ENCODE measurements at regions of chr17 and their contacts with region 1.

Region 1: GRCh38 chr17:81142301-81143199 is 22.8 kb upstream of the PVALEF start:
- DNase-seq: peak; percentile 91
- H3K4me3 ChIP-seq: no peak overlapping the region
- H3K27ac ChIP-seq: peak overlapping the region in 1 of 8 donors; percentile 28
- H3K4me1 ChIP-seq: peaks cover 5 to 34% (median 12%) of the 10 kb centered on the region in 6 donors
- H3K27me3 ChIP-seq: peaks cover 0 to 7% (median 0%) of the 10 kb centered on the region in 7 donors
- CTCF ChIP-seq: peak; percentile 45 to 82 (median 74)
- POLR2A ChIP-seq: no peak

Region 2: GRCh38 chr17:81189670-81190530 is 47.4 kb after region 1 on chr17:
- intact Hi-C with region 1: loop called (anchors 10 kb)
- DNase-seq: no peak
- H3K4me3 ChIP-seq: no peak overlapping the region
- H3K27ac ChIP-seq: no peak overlapping the region
- H3K4me1 ChIP-seq: peaks cover 0 to 27% (median 20%) of the 10 kb centered on the region in 6 donors
- H3K27me3 ChIP-seq: no peaks in the 10 kb centered on the region
- CTCF ChIP-seq: peak in 1 of 11 experiments; percentile 19
- POLR2A ChIP-seq: no peak

Region 3: DNA sequence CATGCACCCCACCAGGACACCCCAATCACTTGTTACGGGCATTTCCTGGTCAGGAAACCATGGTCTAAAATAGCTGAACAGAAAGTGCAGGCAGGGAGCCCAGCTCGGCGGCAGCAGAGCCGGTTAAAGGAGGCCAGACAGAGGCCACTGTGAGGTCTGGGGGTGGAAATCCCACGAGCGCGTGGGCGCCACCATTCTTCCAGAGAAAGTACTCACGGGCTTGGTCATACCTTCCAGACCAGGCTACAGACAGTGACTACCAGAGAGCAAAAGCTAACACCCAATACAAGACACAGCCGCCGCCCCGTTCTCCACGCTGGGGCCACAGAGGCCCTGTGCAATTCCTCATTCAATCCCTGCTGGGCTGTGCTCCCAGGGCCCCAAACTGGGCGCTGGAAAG is 68.3 kb after region 1 on chr17:
- intact Hi-C with region 1: no loop called
- DNase-seq: no peak
- H3K4me3 ChIP-seq: no peak overlapping the region
- H3K27ac ChIP-seq: no peak overlapping the region
- H3K4me1 ChIP-seq: peaks cover 0 to 12% (median 5%) of the 10 kb centered on the region in 6 donors
- H3K27me3 ChIP-seq: no peaks in the 10 kb centered on the region
- CTCF ChIP-seq: no peak
- POLR2A ChIP-seq: no peak

Region 4: DNA sequence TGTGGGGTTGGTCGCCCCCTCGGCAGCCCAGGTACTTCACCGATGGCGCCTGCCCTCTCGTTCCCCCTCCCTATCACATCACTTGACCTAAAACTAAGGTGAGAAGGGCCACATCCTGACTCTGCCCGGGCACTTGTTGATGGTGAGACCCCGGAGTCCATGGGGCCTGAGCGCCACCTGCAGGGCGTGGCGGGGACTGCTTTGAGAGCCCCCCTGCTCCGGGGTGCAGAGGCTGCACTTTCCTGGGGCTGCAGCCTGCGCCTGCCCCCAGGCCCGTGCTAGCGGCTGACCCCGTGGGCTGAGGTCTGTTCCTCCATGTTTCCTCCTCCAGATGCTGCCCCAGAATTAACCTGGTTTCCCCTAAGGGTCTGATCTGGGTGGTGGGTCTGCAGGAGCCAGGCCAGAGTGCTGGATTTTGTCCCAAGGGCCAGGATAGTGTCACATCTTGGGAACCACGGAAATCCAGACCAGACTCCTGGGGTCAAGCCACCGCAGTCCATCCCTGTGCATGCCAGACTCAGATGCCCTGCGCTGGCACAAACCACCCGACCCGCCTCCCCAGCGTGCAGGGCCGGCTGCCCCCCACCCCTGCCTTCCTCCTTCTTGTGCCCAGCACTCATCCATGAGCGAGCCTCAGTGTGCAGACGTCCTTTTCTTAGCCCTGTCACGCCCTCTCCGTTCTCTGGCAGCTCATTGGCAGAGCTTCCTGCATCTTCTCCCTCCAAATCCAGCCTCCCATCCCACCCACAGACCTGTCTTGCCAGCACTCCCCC is 99.3 kb after region 1 on chr17:
- intact Hi-C with region 1: loop called (anchors 5 kb)
- DNase-seq: peak; percentile 90
- H3K4me3 ChIP-seq: no peak overlapping the region
- H3K27ac ChIP-seq: no peak overlapping the region
- H3K4me1 ChIP-seq: peaks cover 19 to 80% (median 57%) of the 10 kb centered on the region in 6 donors
- H3K27me3 ChIP-seq: no peaks in the 10 kb centered on the region
- CTCF ChIP-seq: peak; percentile 50 to 93 (median 82)
- POLR2A ChIP-seq: no peak

Measured in spleen (tissue), 13 donors.